HepG2 (cell line): ENCODE measurements at regions of chr20 and their contacts with region 1.

Region 1: DNA sequence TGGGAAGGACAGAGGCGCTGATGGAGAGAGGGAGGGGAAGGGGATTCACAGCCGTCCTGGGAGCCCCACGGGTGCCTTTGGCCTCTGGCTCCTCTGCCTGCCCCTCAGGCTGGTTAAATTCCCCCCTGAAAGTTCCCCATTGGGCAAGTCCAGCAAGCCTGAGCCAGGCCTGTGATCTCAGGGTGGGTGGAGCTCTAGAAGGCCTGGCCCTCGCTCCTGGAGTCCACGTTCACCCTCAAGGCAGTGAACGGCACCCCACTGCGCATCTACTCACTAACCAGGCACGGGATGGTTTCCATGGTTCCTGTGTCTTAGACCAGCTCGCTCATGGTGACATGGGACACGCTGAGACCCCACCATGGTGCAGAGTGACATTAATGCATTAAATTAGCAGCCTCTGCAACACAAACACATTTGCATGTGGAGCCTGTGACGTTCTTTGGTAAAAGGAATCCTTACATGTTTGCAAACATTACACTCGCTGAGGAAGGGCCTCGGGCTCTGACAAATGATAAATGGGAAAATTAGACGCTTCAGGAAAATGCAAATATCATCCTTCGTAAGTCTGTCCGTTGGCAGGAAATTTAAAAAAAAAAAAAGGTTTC is 452.7 kb downstream of the PREX1 start:
- DNase-seq: no peak
- ATAC-seq: no peak
- H3K4me3 ChIP-seq: no peak overlapping the region
- H3K27ac ChIP-seq: peak overlapping the region; percentile 90
- H3K4me1 ChIP-seq: peaks cover 84% of the 10 kb centered on the region
- H3K27me3 ChIP-seq: no peaks in the 10 kb centered on the region
- CTCF ChIP-seq: no peak
- EP300 ChIP-seq: no peak
- POLR2A ChIP-seq: no peak
- RAD21 ChIP-seq: no peak

Region 2: DNA sequence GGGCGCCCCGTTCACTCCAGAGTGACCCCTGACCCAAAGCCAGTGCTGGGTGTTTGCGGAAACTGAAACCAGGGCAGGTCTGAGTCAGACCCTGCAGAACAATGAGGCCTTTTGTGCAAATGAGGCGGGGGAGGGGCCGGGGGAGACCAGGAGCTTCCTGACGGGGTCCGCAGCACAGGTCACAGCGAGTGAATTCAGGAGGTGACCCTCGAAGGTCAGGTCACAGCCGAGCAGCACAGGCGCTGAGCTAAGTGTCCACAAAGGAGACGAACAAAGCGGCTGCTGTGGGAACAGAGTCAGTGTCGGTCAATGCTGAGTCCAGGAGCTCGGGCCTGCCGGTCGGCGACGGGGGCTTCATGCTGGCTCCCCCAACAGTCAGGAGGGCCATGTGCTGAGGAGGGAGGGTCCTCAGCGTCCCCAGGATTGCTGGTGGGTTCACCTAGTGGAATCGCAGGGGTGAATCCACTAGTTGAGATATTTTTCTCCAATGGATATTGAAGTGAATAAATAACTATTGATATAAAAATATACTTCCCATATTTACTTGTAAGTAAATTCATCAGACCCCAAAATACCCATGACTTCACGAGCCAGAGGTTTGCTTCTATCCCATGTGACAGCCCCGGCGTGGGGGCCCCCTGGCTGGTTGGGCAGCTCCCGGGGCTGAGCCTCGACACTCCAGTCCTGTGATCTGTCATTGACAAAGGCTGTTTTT is 401.4 kb before region 1 on chr20:
- CTCF ChIA-PET with region 1: no interaction called
- POLR2A ChIA-PET with region 1: interaction called, 7 read pairs
- in situ Hi-C with region 1: loop called (anchors 10 kb)
- intact Hi-C with region 1: no loop called
- DNase-seq: peak; percentile 99
- ATAC-seq: peak; percentile 89
- H3K4me3 ChIP-seq: peak overlapping the region in 1 of 3 experiments; percentile 61; a peak in 2 of 6 replicates
- H3K27ac ChIP-seq: peak overlapping the region; percentile 97
- H3K4me1 ChIP-seq: peaks cover 91% of the 10 kb centered on the region
- H3K27me3 ChIP-seq: no peaks in the 10 kb centered on the region
- CTCF ChIP-seq: peak; percentile 14; the same call in 1 of the 2 replicates
- EP300 ChIP-seq: peak; percentile 92 to 93
- POLR2A ChIP-seq: peak; percentile 58 to 59
- RAD21 ChIP-seq: peak; percentile 59; the same call in 1 of the 2 replicates

Region 3: DNA sequence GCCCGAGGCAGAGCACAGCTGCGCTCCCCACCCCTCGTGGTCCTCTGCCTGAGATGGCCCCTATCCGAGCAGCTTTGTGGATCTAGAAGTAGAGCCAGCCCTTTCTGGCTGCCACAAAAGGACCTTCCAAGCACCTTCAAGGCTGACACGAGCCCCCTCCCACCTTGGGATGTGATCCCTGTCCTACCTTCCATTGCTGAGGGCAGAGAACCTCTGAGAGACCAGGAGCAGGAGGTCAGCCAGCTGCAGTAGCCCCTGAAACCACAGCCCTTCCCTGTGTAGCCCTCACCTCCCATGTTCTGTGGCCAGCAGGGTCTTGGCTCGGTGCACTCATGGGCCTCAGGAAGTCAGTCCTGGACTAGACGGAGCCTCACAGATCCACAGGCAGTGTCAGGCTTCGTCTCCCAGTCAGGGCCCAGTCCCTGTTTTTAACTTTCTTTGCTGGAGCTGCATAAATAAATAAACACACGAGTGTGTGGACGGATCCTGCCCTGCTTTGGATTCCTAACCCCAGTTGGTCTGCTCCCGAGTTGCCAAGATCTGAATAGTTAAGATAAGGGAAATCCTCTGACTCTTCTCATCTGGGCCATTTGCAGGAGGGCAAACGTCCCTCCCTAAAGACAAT is 55.0 kb before region 1 on chr20:
- CTCF ChIA-PET with region 1: no interaction called
- POLR2A ChIA-PET with region 1: no interaction called
- in situ Hi-C with region 1: no loop called
- intact Hi-C with region 1: no loop called
- DNase-seq: no peak
- ATAC-seq: peak; percentile 53
- H3K4me3 ChIP-seq: no peak overlapping the region
- H3K27ac ChIP-seq: no peak overlapping the region
- H3K4me1 ChIP-seq: no peaks in the 10 kb centered on the region
- H3K27me3 ChIP-seq: peaks cover 2 to 24% of the 10 kb centered on the region in 2 experiments; a peak in 4 of 5 replicates
- CTCF ChIP-seq: no peak
- EP300 ChIP-seq: no peak
- POLR2A ChIP-seq: no peak
- RAD21 ChIP-seq: no peak

Region 4: DNA sequence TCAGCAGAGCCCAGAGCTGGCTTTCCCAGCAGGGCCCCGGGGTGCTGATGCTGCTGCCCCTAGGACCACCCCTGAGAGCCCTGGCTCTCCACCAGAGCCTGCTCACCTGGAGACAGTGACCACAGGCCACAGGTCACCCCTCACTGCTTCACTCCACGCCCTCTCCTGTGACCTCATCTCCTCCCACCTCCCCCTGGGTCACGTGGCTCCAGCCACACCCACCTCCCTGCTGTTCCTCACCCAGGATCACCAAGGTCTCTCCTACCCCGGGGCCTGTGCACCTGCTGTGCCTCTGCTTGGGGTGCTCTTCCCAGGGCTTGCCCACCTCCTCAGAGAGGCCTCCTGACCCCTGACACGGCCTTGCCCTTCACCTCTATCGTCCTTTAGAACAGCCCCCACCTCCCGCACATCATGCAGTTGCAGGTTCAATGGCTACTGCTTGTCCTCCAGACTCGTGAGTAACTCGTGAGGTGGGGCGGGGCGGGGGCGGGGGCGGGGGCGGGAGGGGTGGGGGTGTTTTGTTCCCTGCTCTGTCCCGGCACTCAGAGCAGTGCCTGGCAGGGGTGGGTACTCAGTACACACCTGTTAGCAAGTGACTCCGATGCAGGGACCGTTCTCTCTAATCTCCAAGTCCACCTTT is 15.3 kb before region 1 on chr20:
- CTCF ChIA-PET with region 1: no interaction called
- POLR2A ChIA-PET with region 1: interaction called, 16 read pairs
- in situ Hi-C with region 1: no loop called
- intact Hi-C with region 1: loop called (anchors 1 kb)
- DNase-seq: peak; percentile 54
- ATAC-seq: peak; percentile 72
- H3K4me3 ChIP-seq: peak overlapping the region; percentile 57 to 71 (median 66)
- H3K27ac ChIP-seq: no peak overlapping the region
- H3K4me1 ChIP-seq: peaks cover 55% of the 10 kb centered on the region
- H3K27me3 ChIP-seq: no peaks in the 10 kb centered on the region
- CTCF ChIP-seq: no peak
- EP300 ChIP-seq: no peak
- POLR2A ChIP-seq: 0 out of 4 replicates have a peak, but pooled peaks of 1 of the 2 experiments have one; percentile 54
- RAD21 ChIP-seq: no peak

Region 5: GRCh38 chr20:48364688-48365421 is 10.2 kb before region 1 on chr20:
- CTCF ChIA-PET with region 1: no interaction called
- POLR2A ChIA-PET with region 1: interaction called, 16 read pairs
- in situ Hi-C with region 1: no loop called
- intact Hi-C with region 1: no loop called
- DNase-seq: no peak
- ATAC-seq: no peak
- H3K4me3 ChIP-seq: no peak overlapping the region
- H3K27ac ChIP-seq: no peak overlapping the region
- H3K4me1 ChIP-seq: peaks cover 14% of the 10 kb centered on the region
- H3K27me3 ChIP-seq: no peaks in the 10 kb centered on the region
- CTCF ChIP-seq: no peak
- EP300 ChIP-seq: no peak
- POLR2A ChIP-seq: no peak
- RAD21 ChIP-seq: no peak

Region 6: DNA sequence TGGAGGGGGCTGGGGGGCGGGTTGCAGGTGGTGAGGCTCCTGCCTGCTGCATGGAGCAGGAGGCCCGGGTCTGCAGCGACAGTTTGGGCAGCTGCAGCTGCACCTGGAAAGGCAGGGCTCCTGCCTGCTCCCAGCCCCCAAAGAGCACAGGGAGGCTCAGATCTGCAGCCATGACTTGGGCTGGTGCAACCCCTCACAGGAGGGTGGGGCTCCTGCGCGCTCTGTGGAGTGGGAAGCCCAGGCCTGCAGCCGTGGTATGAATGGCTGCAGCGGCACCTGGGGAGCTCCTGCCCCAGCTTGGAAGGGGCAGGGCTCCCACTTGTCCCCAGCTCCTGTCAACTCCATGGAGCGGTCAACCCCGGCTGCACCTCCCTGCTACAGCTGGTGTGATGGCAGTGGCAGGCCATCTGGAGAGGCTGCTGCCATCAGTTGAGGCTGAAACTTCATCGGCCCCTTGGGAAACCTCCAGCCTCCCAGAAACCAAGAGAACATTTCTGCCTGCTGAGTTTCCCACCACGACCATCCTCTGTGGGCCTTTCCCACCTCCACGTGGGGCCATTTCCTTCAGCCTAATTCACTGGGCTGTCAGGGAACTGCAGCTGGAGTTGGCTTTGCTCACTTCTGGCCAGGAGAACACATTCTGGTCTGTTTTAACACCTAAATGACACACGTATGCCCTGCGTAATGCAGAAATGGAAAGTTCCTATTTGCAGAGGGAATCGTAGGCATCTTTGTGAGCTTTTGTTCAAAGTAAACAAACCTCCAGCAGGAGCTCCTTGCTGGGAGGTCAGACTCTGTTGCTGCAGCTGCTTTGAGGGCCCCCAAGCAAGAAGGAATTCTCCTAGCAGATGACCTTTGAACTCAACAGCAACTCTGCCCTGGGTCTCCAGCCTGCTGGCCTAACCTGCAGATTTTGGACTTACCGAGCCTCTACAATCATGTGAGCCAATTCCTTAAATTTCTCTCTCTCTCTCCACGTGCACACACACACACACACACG is 23.7 kb after region 1 on chr20:
- CTCF ChIA-PET with region 1: no interaction called
- POLR2A ChIA-PET with region 1: interaction called, 35 read pairs
- in situ Hi-C with region 1: no loop called
- intact Hi-C with region 1: loop called (anchors 1 kb)
- DNase-seq: peak; percentile 80
- ATAC-seq: peak; percentile 58
- H3K4me3 ChIP-seq: peak overlapping the region in 1 of 3 experiments; percentile 31; a peak in 1 of 6 replicates
- H3K27ac ChIP-seq: peak overlapping the region; percentile 25
- H3K4me1 ChIP-seq: peaks cover 59% of the 10 kb centered on the region
- H3K27me3 ChIP-seq: no peaks in the 10 kb centered on the region
- CTCF ChIP-seq: no peak
- EP300 ChIP-seq: peak in 1 of 2 experiments; percentile 59; a peak in 2 of 4 replicates
- POLR2A ChIP-seq: no peak
- RAD21 ChIP-seq: no peak

Region 7: GRCh38 chr20:48921151-48921898 is 546.2 kb after region 1 on chr20 and contains the start of gene ARFGEF2:
- CTCF ChIA-PET with region 1: no interaction called
- POLR2A ChIA-PET with region 1: no interaction called
- in situ Hi-C with region 1: no loop called
- intact Hi-C with region 1: loop called (anchors 10 kb)
- DNase-seq: peak; percentile 92
- ATAC-seq: peak; percentile 68
- H3K4me3 ChIP-seq: peak within 1 kb of the TSS; percentile 86 to 95 (median 91)
- H3K27ac ChIP-seq: peak within 1 kb of the TSS; percentile 91
- H3K4me1 ChIP-seq: peaks cover 54% of the 10 kb centered on the region
- H3K27me3 ChIP-seq: peaks cover 0 to 5% of the 10 kb centered on the region in 2 experiments; a peak in 1 of 5 replicates
- CTCF ChIP-seq: peak; percentile 54
- EP300 ChIP-seq: peak; percentile 26 to 90; a peak in 2 of 4 replicates
- POLR2A ChIP-seq: peak; percentile 84 to 88; a peak in 3 of 4 replicates
- RAD21 ChIP-seq: peak; percentile 91
- total RNA-seq, gene ARFGEF2: 60.8 and 89.4 TPM in 2 replicates